Heart left ventricle (tissue), 16 donors: ENCODE measurements at regions of chr1 and their contacts with region 1.

Region 1: DNA sequence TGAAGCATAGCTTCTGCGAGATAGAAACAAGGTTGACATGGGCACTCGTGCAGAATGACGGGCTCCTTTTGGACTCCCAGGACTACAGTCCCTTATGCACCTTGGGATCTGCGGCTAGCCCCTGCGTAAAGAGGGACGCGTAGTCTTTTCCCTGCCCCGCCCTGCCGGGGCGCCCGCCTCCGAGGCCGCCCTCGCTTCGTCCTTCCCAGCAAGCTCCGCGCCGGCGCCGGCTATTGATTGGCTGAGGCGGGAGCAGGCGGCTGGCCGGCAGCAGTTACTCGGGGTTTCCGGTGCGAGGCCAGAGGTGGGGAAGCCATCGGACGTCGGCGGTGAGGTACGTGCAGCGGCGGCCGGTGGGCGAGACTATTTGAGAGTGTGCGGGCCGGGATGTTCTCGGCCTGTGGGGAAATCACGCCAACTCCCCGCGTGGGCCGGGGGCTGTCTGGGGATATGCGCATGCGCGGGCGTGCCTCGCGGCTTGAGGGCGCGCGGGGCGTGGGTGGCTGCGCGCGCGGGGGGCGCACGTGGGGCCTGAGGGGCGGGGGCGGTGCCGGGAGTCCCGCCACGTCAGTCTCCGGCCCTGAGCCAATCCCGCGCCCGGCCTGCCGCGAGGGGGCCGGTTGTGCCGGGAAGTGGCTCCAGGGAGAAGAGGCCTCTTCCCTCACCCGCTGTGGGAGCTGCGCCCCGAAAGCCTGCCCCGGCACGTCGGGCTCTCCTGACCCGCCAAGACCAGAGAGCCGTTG is at the start of gene TXLNA:
- DNase-seq: peak; percentile 96 to 98 (median 96)
- ATAC-seq: peak; percentile 95 to 97 (median 96)
- H3K4me3 ChIP-seq: peak within 1 kb of the TSS; percentile 30 to 81 (median 69)
- H3K27ac ChIP-seq: peak within 1 kb of the TSS; percentile 80 to 99 (median 94)
- H3K4me1 ChIP-seq: peaks cover 4 to 54% (median 38%) of the 10 kb centered on the region in 12 donors
- H3K27me3 ChIP-seq: no peaks in the 10 kb centered on the region
- CTCF ChIP-seq: peak in 6 of 12 donors; percentile 7 to 32 (median 18)
- POLR2A ChIP-seq: peak in 1 of 2 donors; percentile 50
- total RNA-seq, gene TXLNA: 13.2 to 35.9 (median 18.6) TPM

Region 2: DNA sequence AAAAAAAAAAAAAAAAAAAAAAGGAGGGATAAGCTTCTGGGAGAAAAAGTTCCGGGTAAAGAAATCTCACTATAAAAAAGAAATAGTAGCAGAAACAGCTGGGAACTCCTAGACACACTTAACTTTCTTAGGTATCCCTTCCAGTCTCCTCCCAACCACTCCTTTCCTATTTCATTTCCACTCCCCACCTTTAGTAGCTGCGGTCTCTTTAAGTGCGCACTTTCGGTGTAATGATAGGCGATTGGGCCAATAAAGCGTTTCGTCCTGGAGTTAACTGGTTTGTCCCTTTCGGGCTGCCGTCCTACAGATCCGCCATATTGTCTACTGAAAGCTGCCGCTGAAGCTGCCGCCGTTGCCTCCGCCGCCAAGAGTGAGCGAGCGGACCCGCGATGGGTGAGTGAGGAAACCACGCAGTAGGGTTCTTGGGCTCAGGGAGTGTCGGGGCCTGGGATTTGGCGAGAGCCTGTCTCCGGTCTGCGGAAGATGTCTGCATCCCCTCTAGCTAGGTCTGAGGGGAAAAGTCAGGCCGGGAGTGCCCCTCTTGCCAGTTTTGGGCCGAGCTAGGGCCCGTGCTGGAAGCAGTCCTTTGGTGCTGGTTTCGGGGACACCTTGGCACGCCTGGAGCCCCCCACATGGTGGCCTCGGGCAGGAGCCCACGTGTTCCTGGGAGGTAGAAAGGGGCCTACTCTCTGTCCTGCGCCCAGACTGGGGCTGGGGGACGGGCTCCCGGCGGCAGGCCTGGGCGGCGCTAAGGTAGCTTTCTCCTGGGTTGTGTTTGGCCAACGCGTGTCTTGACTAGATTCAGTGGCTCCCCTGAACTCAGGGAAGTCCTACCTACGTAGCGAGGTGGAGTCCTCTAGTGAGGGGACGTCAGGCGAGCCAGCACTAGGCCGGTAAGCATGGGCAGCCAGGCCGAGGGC is 71.6 kb before region 1 on chr1 and contains the start of gene KPNA6:
- intact Hi-C with region 1: loop called in 1 of 10 experiments (anchors 2 kb)
- DNase-seq: peak; percentile 90 to 95 (median 92)
- ATAC-seq: peak; percentile 89 to 95 (median 90)
- H3K4me3 ChIP-seq: peak within 1 kb of the TSS; percentile 70 to 100 (median 89)
- H3K27ac ChIP-seq: peak within 1 kb of the TSS; percentile 82 to 94 (median 90)
- H3K4me1 ChIP-seq: peaks cover 12 to 50% (median 39%) of the 10 kb centered on the region in 12 donors
- H3K27me3 ChIP-seq: no peaks in the 10 kb centered on the region
- CTCF ChIP-seq: no peak
- POLR2A ChIP-seq: peak in 1 of 2 donors; percentile 29
- total RNA-seq, gene KPNA6: 58.4 to 99.2 (median 78.6) TPM

Region 3: GRCh38 chr1:32200226-32201010 is 20.8 kb after region 1 on chr1 and contains the start of gene CCDC28B:
- intact Hi-C with region 1: loop called in 1 of 10 experiments (anchors 2 kb)
- DNase-seq: peak; percentile 74 to 83 (median 80)
- ATAC-seq: peak; percentile 29 to 66 (median 50)
- H3K4me3 ChIP-seq: peak within 1 kb of the TSS; percentile 39 to 78 (median 66)
- H3K27ac ChIP-seq: peak within 1 kb of the TSS; percentile 37 to 93 (median 86)
- H3K4me1 ChIP-seq: peaks cover 5 to 55% (median 29%) of the 10 kb centered on the region in 12 donors
- H3K27me3 ChIP-seq: no peaks in the 10 kb centered on the region
- CTCF ChIP-seq: no peak
- POLR2A ChIP-seq: peak in 1 of 2 donors; percentile 24
- total RNA-seq, gene CCDC28B: 12.5 to 23.7 (median 16.5) TPM

Region 4: GRCh38 chr1:32223683-32224082 is 44.1 kb after region 1 on chr1:
- intact Hi-C with region 1: no loop called
- DNase-seq: no peak
- ATAC-seq: peak in 1 of 4 donors; percentile 57
- H3K4me3 ChIP-seq: peak overlapping the region in 7 of 12 donors; percentile 74 to 95 (median 85)
- H3K27ac ChIP-seq: peak overlapping the region in 9 of 12 donors; percentile 9 to 97 (median 85)
- H3K4me1 ChIP-seq: peaks cover 13 to 29% (median 25%) of the 10 kb centered on the region in 12 donors
- H3K27me3 ChIP-seq: no peaks in the 10 kb centered on the region
- CTCF ChIP-seq: peak in 4 of 12 donors; percentile 9 to 26 (median 18)
- POLR2A ChIP-seq: no peak

Region 5: DNA sequence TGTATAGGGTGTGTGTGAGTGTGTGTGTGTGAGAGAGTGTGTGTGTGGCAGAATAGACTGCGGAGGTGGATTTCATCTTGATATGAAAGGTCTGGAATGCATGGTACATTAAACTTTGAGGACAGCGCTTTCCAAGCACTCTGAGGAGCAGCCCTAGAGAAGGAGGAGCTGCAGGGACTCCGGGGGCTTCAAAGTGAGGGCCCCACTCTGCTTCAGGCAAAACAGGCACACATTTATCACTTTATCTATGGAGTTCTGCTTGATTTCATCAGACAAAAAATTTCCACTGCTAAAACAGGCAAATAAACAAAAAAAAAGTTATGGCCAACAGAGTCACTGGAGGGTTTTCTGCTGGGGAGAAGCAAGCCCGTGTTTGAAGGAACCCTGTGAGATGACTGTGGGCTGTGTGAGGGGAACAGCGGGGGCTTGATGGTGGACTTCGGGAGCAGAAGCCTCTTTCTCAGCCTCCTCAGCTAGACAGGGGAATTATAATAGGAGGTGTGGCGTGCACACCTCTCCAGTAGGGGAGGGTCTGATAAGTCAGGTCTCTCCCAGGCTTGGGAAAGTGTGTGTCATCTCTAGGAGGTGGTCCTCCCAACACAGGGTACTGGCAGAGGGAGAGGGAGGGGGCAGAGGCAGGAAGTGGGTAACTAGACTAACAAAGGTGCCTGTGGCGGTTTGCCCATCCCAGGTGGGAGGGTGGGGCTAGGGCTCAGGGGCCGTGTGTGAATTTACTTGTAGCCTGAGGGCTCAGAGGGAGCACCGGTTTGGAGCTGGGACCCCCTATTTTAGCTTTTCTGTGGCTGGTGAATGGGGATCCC is 94.0 kb after region 1 on chr1:
- intact Hi-C with region 1: no loop called
- DNase-seq: no peak
- ATAC-seq: no peak
- H3K4me3 ChIP-seq: no peak overlapping the region
- H3K27ac ChIP-seq: no peak overlapping the region
- H3K4me1 ChIP-seq: peaks cover 0 to 6% (median 0%) of the 10 kb centered on the region in 12 donors
- H3K27me3 ChIP-seq: peaks cover 5 to 39% (median 21%) of the 10 kb centered on the region in 9 donors
- CTCF ChIP-seq: no peak
- POLR2A ChIP-seq: no peak